Activated naive CD4-positive, alpha-beta T cell treated with anti-CD3 and anti-CD28 coated beads for 36 hours (primary cell): ENCODE measurements at regions of chrX and their contacts with region 1.

Region 1: DNA sequence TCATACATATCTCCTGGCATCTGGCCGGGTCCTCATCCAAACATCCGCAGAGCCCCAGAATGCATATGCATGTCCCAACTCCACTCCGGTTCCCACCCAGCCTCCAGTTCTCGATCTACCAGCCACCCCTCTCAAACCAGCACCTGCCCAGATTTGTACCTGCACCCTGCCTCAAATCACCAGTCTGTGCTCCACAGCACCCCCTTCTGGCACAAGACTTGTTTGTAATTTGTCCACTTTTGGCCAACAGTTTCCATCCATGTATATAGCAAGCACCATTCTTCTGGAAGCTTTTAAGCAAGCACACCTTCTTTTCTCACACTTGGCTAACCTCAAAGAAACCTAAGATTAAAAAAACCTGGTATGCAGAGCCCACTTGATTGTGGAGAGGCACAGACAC is 644.1 kb downstream of the MID1IP1 start:
- DNase-seq: peak; percentile 70
- H3K4me3 Mint-ChIP-seq: no peak overlapping the region
- H3K27ac Mint-ChIP-seq: peak overlapping the region; percentile 71
- H3K4me1 Mint-ChIP-seq: peaks cover 47% of the 10 kb centered on the region
- H3K27me3 Mint-ChIP-seq: no peaks in the 10 kb centered on the region

Region 2: DNA sequence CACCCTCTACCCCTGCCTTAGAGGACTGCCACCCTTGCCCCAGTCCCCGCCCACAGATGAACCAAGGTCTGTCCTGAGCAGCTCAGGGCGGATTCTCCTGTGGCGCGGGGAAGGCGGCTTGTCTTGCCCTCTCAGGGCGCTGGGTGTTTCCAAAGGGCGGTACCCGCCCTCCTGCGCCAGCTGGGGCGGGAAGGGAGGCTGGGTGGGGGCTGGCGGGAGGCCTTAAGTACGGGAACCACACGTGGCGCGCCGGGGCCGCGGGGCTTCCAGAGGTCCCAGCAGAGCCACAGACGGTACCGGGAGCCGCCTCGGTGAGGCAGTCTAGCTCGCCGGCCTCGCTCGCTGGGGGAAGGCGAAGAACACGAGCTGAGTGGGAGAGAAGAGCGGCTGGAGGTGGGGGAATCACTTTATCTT is 283.0 kb before region 1 on chrX:
- CTCF ChIA-PET with region 1: interaction called, 3 read pairs
- intact Hi-C with region 1: loop called (anchors 5 kb)
- DNase-seq: peak; percentile 66
- H3K4me3 Mint-ChIP-seq: peak overlapping the region; percentile 41
- H3K27ac Mint-ChIP-seq: no peak overlapping the region
- H3K4me1 Mint-ChIP-seq: peaks cover 28% of the 10 kb centered on the region
- H3K27me3 Mint-ChIP-seq: peaks cover 2% of the 10 kb centered on the region

Region 3: GRCh38 chrX:39688576-39689375 is 243.4 kb after region 1 on chrX:
- CTCF ChIA-PET with region 1: no interaction called
- intact Hi-C with region 1: no loop called
- DNase-seq: peak; percentile 31
- H3K4me3 Mint-ChIP-seq: peak overlapping the region; percentile 15
- H3K27ac Mint-ChIP-seq: no peak overlapping the region
- H3K4me1 Mint-ChIP-seq: peaks cover 3% of the 10 kb centered on the region
- H3K27me3 Mint-ChIP-seq: no peaks in the 10 kb centered on the region

Region 4: GRCh38 chrX:40291553-40291952 is 846.2 kb after region 1 on chrX:
- CTCF ChIA-PET with region 1: no interaction called
- intact Hi-C with region 1: no loop called
- DNase-seq: no peak
- H3K4me3 Mint-ChIP-seq: no peak overlapping the region
- H3K27ac Mint-ChIP-seq: no peak overlapping the region
- H3K4me1 Mint-ChIP-seq: no peaks in the 10 kb centered on the region
- H3K27me3 Mint-ChIP-seq: no peaks in the 10 kb centered on the region